GM12878 (cell line): ENCODE measurements at regions of chr7 and their contacts with region 1.

Region 1: DNA sequence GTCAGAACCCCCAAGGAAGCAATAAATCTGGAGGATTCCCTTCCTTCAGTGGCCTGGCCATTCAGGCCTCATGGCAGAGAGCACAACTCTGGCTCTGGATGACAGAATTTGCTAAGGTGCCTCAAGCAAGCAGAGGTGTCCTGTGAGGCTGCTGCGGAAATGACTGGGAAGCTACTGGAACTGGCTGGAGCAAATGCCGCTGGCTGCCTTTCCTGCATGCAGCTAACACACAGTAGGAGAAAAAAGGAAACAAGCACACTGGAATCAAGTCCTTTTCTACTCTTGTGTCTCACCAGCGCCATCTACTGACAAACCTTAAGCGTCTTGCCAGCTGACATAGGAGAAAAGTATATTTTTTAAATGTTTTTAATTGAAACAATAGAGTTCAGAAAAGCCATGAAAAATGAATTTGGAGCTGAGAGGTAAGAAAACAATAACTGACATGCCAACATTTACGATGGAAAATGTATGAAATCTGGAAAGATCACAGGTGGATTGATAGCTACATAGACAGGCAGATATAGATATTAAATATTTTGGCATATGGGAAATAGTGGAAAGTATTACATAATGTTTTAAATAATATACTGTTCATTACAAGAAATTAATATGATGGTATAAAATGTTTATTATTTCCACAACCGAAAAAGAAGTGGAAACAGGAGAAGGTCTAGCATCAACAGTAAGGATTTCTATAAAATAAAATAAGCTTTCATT is 951.6 kb downstream of the ANKRD7 start:
- DNase-seq: peak; percentile 1
- ATAC-seq: peak; percentile 81
- H3K4me3 ChIP-seq: no peak overlapping the region
- H3K27ac ChIP-seq: no peak overlapping the region
- H3K4me1 ChIP-seq: no peaks in the 10 kb centered on the region
- H3K27me3 ChIP-seq: no peaks in the 10 kb centered on the region
- CTCF ChIP-seq: peak; percentile 70 to 76 (median 75)
- EP300 ChIP-seq: no peak
- POLR2A ChIP-seq: no peak
- RAD21 ChIP-seq: peak; percentile 67

Region 2: GRCh38 chr7:118259115-118259514 is 917.0 kb before region 1 on chr7:
- CTCF ChIA-PET with region 1: interaction called, 10 read pairs
- POLR2A ChIA-PET with region 1: no interaction called
- RAD21 ChIA-PET with region 1: interaction called, 4 read pairs
- SMC1A ChIA-PET with region 1: interaction called, 4 read pairs
- in situ Hi-C with region 1: no loop called
- intact Hi-C with region 1: loop called (anchors 5 kb)
- DNase-seq: no peak
- ATAC-seq: no peak
- H3K4me3 ChIP-seq: no peak overlapping the region
- H3K27ac ChIP-seq: no peak overlapping the region
- H3K4me1 ChIP-seq: no peaks in the 10 kb centered on the region
- H3K27me3 ChIP-seq: no peaks in the 10 kb centered on the region
- CTCF ChIP-seq: no peak; a peak in 1 of 6 replicates
- EP300 ChIP-seq: no peak
- POLR2A ChIP-seq: no peak
- RAD21 ChIP-seq: peak; percentile 51; the same call in 1 of the 2 replicates

Region 3: GRCh38 chr7:118352854-118353453 is 823.1 kb before region 1 on chr7:
- CTCF ChIA-PET with region 1: interaction called, 13 read pairs
- POLR2A ChIA-PET with region 1: no interaction called
- RAD21 ChIA-PET with region 1: no interaction called
- SMC1A ChIA-PET with region 1: interaction called, 4 read pairs
- in situ Hi-C with region 1: loop called (anchors 25 kb)
- intact Hi-C with region 1: loop called (anchors 2 kb)
- DNase-seq: no peak
- ATAC-seq: peak; percentile 65
- H3K4me3 ChIP-seq: no peak overlapping the region
- H3K27ac ChIP-seq: no peak overlapping the region
- H3K4me1 ChIP-seq: no peaks in the 10 kb centered on the region
- H3K27me3 ChIP-seq: no peaks in the 10 kb centered on the region
- CTCF ChIP-seq: peak in 2 of 3 experiments; percentile 12 to 46; a peak in 2 of 6 replicates
- EP300 ChIP-seq: no peak
- POLR2A ChIP-seq: no peak
- RAD21 ChIP-seq: peak; percentile 59

Region 4: GRCh38 chr7:118870187-118870586 is 305.9 kb before region 1 on chr7:
- CTCF ChIA-PET with region 1: interaction called, 9 read pairs
- POLR2A ChIA-PET with region 1: no interaction called
- RAD21 ChIA-PET with region 1: no interaction called
- SMC1A ChIA-PET with region 1: interaction called, 3 read pairs
- in situ Hi-C with region 1: no loop called
- intact Hi-C with region 1: loop called (anchors 5 kb)
- DNase-seq: no peak
- ATAC-seq: peak; percentile 62
- H3K4me3 ChIP-seq: no peak overlapping the region
- H3K27ac ChIP-seq: no peak overlapping the region
- H3K4me1 ChIP-seq: no peaks in the 10 kb centered on the region
- H3K27me3 ChIP-seq: no peaks in the 10 kb centered on the region
- CTCF ChIP-seq: peak; percentile 19 to 33 (median 23); a peak in 3 of 6 replicates
- EP300 ChIP-seq: no peak
- POLR2A ChIP-seq: no peak
- RAD21 ChIP-seq: peak; percentile 36; the same call in 1 of the 2 replicates

Region 5: DNA sequence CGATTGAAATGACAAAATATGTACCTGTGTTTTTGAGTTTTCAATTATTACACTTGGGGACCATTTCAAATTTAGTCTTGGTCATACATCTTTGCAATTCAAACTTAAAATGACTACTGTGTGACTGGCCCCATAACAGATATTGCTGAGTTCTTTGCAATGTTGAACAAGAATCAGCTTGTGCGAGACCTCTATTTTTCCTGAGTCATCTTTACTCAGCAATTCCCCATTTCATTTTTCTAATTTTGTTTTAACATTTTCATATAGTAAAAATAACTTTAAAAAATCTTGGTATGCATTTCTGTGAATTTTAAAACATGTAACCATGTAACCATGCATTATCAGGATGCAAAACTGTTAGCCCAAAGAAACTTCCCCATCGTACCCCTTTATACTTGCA is 273.5 kb before region 1 on chr7:
- CTCF ChIA-PET with region 1: no interaction called
- POLR2A ChIA-PET with region 1: no interaction called
- RAD21 ChIA-PET with region 1: no interaction called
- SMC1A ChIA-PET with region 1: no interaction called
- in situ Hi-C with region 1: no loop called
- intact Hi-C with region 1: loop called (anchors 10 kb)
- DNase-seq: no peak
- ATAC-seq: no peak
- H3K4me3 ChIP-seq: no peak overlapping the region
- H3K27ac ChIP-seq: no peak overlapping the region
- H3K4me1 ChIP-seq: no peaks in the 10 kb centered on the region
- H3K27me3 ChIP-seq: no peaks in the 10 kb centered on the region
- CTCF ChIP-seq: no peak
- EP300 ChIP-seq: no peak
- POLR2A ChIP-seq: no peak
- RAD21 ChIP-seq: no peak

Region 6: GRCh38 chr7:119802147-119802546 is 626.1 kb after region 1 on chr7:
- CTCF ChIA-PET with region 1: no interaction called
- POLR2A ChIA-PET with region 1: no interaction called
- RAD21 ChIA-PET with region 1: no interaction called
- SMC1A ChIA-PET with region 1: no interaction called
- in situ Hi-C with region 1: no loop called
- intact Hi-C with region 1: no loop called
- DNase-seq: no peak
- ATAC-seq: no peak
- H3K4me3 ChIP-seq: no peak overlapping the region
- H3K27ac ChIP-seq: no peak overlapping the region
- H3K4me1 ChIP-seq: no peaks in the 10 kb centered on the region
- H3K27me3 ChIP-seq: no peaks in the 10 kb centered on the region
- CTCF ChIP-seq: no peak
- EP300 ChIP-seq: no peak
- POLR2A ChIP-seq: no peak
- RAD21 ChIP-seq: no peak